Heart right ventricle (tissue), 16 donors: ENCODE measurements at regions of chr2 and their contacts with region 1.

Region 1: DNA sequence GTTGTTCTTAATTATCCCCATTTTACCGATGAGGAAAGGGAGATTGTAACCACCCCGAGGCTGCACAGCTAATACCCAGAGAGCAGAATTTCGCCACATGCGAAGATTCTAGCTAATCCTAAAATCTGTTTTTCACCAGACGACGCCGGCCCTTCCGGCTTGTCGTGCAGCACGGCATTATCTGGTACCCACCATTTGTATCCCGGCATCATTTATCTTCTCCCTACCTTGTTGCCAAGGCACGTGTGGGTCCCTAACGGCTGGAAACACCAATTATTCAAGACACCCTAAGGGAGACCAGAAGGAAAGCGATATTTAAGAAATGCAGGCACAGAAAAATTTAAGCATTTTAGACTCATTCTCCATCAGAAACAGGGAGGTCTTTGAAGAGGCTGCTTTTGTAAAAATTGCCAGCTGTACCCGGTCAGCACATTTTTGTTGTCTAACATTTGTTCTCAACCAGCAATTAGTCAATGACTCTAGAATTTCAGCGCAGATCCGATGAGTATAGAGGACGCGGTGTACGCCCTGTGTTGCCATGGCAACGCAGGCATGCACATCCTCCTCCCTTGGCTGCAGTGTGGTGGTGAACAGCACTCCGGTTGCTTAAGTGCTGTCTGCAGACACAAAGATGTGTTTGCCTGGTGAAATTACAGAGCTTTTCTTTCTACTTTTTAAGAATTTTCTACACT is 111.6 kb downstream of the AGAP1 start:
- DNase-seq: peak; percentile 59 to 76
- ATAC-seq: peak in 7 of 8 donors; percentile 78 to 95 (median 90)
- H3K4me3 ChIP-seq: no peak overlapping the region
- H3K27ac ChIP-seq: peak overlapping the region in 3 of 10 donors; percentile 12 to 27 (median 25)
- H3K4me1 ChIP-seq: peaks cover 0 to 44% (median 8%) of the 10 kb centered on the region in 9 donors
- H3K27me3 ChIP-seq: no peaks in the 10 kb centered on the region
- CTCF ChIP-seq: no peak

Region 2: GRCh38 chr2:234996069-234996940 is 609.2 kb before region 1 on chr2:
- intact Hi-C with region 1: no loop called
- DNase-seq: no peak
- ATAC-seq: no peak
- H3K4me3 ChIP-seq: no peak overlapping the region
- H3K27ac ChIP-seq: no peak overlapping the region
- H3K4me1 ChIP-seq: peaks cover 0 to 62% (median 33%) of the 10 kb centered on the region in 9 donors
- H3K27me3 ChIP-seq: no peaks in the 10 kb centered on the region
- CTCF ChIP-seq: no peak

Region 3: GRCh38 chr2:235627682-235628081 is 22.2 kb after region 1 on chr2:
- intact Hi-C with region 1: loop called in 1 of 10 experiments (anchors 1 kb)
- DNase-seq: no peak
- ATAC-seq: peak in 7 of 8 donors; percentile 56 to 76 (median 61)
- H3K4me3 ChIP-seq: no peak overlapping the region
- H3K27ac ChIP-seq: peak overlapping the region in 6 of 10 donors; percentile 28 to 65 (median 45)
- H3K4me1 ChIP-seq: peaks cover 0 to 17% (median 12%) of the 10 kb centered on the region in 9 donors
- H3K27me3 ChIP-seq: no peaks in the 10 kb centered on the region
- CTCF ChIP-seq: no peak